SK-N-SH (cell line): ENCODE measurements at regions of chr15 and their contacts with region 1.

Region 1: DNA sequence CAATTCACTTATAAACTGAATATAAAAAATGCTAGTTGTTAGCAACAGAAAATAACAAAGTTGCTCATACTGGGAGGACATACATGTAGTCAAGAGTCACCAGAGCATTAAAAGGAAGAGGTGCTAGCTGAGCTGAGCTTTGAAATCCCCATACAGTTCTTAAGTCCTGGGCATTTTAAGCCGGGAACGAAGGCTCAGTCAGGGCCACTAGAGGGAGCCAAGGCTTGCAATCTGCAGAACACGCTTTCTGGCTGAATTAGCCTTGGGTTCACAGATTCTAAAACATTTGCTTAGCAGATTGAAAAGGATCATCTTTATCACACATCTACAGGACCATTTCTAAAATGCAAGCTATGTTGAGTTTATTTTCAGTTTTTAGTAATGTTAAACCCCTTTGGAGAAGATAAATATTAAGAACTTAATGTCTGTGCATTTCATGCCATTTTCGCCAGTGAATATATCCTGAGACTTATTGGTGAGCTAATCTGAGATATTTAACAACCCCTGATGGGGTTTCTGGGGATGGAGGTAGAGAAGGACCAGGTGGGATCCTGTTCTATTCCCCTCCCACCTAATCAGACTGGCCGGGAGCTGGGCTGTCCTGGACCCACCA is 26.3 kb upstream of the MNS1 start:
- DNase-seq: peak; percentile 71
- H3K4me3 ChIP-seq: no peak overlapping the region
- H3K27ac ChIP-seq: no peak overlapping the region
- H3K4me1 ChIP-seq: no peaks in the 10 kb centered on the region
- H3K27me3 ChIP-seq: no peaks in the 10 kb centered on the region
- CTCF ChIP-seq: peak; percentile 94
- EP300 ChIP-seq: no peak
- RAD21 ChIP-seq: peak; percentile 80

Region 2: DNA sequence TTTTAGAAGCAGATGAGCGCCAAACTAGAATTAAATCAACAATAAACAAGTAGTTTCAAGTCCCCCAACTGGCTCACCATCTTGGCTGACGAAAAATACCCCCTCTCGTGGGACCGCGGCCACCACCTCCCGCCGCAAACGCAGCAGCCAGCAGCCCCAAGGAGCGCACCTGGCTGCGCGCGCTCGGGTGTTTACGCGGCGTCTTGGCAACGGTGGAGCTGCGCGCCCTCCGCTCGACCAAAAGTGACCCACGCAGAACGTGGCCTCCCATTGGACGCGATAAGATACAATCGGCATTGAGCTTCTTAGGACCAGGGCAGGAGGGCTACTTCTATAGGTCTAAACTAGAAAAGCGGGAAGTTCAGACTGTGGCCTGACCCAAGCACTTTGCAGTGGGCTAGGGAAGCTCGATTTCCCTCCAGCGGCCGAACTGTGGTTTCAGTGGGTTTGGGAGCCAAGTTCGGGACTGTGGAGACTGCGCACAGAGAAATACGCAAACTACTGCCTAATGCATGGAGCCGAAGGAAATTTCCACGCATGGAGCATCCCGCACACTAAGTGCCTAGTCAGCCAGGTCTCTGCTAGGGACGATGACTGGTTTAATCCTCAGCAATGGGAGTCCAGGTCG is 26.2 kb before region 1 on chr15 and contains the start of gene MNS1:
- CTCF ChIA-PET with region 1: interaction called, 17 read pairs
- POLR2A ChIA-PET with region 1: no interaction called
- DNase-seq: peak; percentile 93
- H3K4me3 ChIP-seq: peak within 1 kb of the TSS; percentile 77 to 88
- H3K27ac ChIP-seq: peak within 1 kb of the TSS in 1 of 2 experiments; percentile 58; a peak in 2 of 4 replicates
- H3K4me1 ChIP-seq: peaks cover 0 to 5% of the 10 kb centered on the region in 2 experiments; a peak in 2 of 4 replicates
- H3K27me3 ChIP-seq: no peaks in the 10 kb centered on the region
- CTCF ChIP-seq: no peak
- EP300 ChIP-seq: no peak
- RAD21 ChIP-seq: no peak
- polyA plus RNA-seq, gene MNS1: 0.42 and 0.90 TPM in 2 replicates

Region 3: DNA sequence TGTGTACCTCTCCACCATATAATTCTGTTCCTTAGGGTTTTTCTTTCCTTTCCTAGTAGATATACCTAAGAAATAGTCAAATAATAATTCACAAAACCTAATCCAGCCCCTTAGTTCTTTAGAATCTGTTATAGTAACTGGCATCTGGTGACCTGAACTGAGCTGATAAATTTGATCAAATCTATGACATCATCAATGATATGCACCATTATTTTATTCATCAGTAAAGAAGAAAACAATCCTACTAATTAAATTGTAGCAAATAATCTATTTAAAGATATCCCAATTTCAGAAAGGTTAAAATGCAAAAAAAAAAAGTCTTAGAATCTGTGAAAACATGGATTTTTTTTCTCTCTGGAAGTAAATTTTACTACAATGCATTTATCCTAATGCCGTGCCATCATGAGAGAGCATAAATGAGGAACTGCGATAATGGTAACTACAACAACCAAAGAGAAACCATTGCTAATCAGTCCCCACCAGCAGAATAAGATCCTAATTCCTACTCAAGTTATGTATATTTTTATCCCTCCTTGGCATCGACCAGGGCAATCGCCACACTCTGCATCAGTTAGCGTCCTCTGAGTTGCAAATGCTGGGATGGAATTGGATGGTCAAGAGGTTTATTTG is 19.7 kb before region 1 on chr15:
- CTCF ChIA-PET with region 1: interaction called, 21 read pairs
- POLR2A ChIA-PET with region 1: no interaction called
- DNase-seq: no peak
- H3K4me3 ChIP-seq: no peak overlapping the region
- H3K27ac ChIP-seq: no peak overlapping the region
- H3K4me1 ChIP-seq: peaks cover 0 to 12% of the 10 kb centered on the region in 2 experiments; a peak in 2 of 4 replicates
- H3K27me3 ChIP-seq: no peaks in the 10 kb centered on the region
- CTCF ChIP-seq: no peak
- EP300 ChIP-seq: no peak
- RAD21 ChIP-seq: no peak